ENCODE measurements at regions of chr6 and their contacts with region 1.

Region 1: GRCh38 chr6:28940858-28941680 is 17.3 kb upstream of the TRIM27 start:
- DNase-seq: peak; percentile 88
- H3K4me3 ChIP-seq: peak overlapping the region; percentile 36
- H3K27ac ChIP-seq: peak overlapping the region; percentile 80
- H3K4me1 ChIP-seq: no peaks in the 10 kb centered on the region
- H3K27me3 ChIP-seq: no peaks in the 10 kb centered on the region
- CTCF ChIP-seq: no peak

Region 2: DNA sequence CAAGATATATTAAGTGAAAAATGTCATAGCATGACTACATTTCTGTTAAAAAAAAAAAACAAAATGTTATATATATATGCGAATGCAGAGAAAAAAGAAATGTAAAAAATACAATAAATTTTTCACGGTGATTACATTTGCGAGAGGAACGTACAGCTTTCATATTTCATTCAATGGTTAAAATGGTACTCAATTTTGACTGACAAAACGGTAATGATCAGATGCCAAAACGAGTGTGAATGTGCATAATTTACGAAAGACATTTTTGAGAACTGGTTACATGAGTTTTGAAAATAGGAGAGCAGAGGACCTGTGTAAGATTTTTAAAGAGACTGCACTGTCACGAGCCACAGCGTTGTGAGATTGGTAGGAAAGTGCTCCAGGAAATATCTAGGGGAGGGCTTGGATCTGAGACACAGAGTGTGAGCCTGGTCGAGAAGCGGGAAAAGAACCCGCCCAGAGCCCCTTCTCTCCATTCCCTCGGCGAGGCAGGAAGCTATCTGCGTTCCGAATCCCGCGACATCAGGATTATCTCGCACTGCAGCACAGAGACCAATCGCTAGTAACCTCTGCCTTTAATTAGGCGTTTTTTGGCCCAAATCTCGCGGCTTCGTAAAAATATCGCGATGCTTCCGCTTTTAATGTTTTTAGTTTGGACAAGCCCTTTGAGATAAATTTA is 45.8 kb before region 1 on chr6:
- intact Hi-C with region 1: loop called (anchors 5 kb)
- DNase-seq: peak; percentile 95
- H3K4me3 ChIP-seq: peak overlapping the region; percentile 70
- H3K27ac ChIP-seq: peak overlapping the region; percentile 99
- H3K4me1 ChIP-seq: peaks cover 3% of the 10 kb centered on the region
- H3K27me3 ChIP-seq: no peaks in the 10 kb centered on the region
- CTCF ChIP-seq: no peak

Region 3: DNA sequence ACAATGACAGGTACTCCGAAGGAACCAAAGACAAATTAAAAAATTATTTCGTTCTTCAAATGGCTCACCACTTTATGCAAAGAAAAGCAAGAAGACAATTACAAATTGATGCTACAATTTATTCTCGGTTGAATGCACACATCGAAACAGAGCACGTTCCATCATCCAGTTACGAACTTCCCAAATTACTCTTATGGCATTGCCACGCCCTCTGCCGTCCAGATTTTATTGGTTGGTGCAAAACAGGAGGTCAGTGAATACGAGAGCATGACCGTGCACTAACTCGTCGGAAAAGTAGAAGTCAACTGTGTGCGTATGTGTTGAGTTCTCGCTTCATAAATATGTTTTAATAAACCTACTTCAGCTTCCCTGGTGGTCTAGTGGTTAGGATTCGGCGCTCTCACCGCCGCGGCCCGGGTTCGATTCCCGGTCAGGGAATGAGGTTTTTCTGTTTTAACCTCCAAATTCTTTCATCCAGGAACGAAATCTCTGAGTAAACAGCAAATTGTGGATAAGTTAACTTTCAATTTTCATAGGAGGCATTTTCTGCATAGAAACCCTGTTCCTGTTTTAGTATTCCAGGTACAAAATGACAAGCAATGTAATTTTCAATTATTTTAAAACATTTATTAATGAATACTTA is 40.9 kb after region 1 on chr6:
- intact Hi-C with region 1: loop called (anchors 2 kb)
- DNase-seq: peak; percentile 77
- H3K4me3 ChIP-seq: peak overlapping the region; percentile 44
- H3K27ac ChIP-seq: peak overlapping the region; percentile 21
- H3K4me1 ChIP-seq: no peaks in the 10 kb centered on the region
- H3K27me3 ChIP-seq: no peaks in the 10 kb centered on the region
- CTCF ChIP-seq: no peak

Measured in colonic mucosa (tissue), 4 donors.